Pancreas (tissue), 10 donors: ENCODE measurements at regions of chr1 and their contacts with region 1.

Region 1: GRCh38 chr1:220099826-220100225 is 5.9 kb downstream of the IARS2 start:
- DNase-seq: no peak
- ATAC-seq: no peak
- H3K4me3 ChIP-seq: no peak overlapping the region
- H3K27ac ChIP-seq: no peak overlapping the region
- H3K4me1 ChIP-seq: peaks cover 5 to 10% (median 5%) of the 10 kb centered on the region in 3 donors
- H3K27me3 ChIP-seq: no peaks in the 10 kb centered on the region
- CTCF ChIP-seq: no peak

Region 2: DNA sequence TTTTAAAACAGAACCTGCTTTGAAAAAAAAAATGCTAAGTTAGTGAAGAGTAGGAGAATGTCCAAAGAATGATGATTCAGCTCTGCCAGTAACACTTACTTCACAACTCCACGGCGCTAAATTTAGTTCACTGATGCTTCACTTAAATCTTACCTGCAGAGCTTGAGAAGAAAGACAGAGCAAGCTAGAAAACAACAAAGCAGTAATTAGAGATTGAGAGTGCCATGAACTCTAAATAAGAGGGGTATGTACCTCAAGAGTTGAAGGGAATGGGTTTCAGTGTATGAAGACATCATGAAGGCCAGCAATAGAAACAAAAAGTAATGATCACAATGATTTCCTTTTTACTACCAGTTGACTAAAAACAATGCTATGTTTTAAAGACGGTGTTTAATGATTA is 86.3 kb before region 1 on chr1:
- intact Hi-C with region 1: loop called in 1 of 3 experiments (anchors 10 kb)
- DNase-seq: no peak
- ATAC-seq: peak in 1 of 4 donors; percentile 27
- H3K4me3 ChIP-seq: no peak overlapping the region
- H3K27ac ChIP-seq: no peak overlapping the region
- H3K4me1 ChIP-seq: no peaks in the 10 kb centered on the region
- H3K27me3 ChIP-seq: no peaks in the 10 kb centered on the region
- CTCF ChIP-seq: no peak

Region 3: GRCh38 chr1:220219865-220220698 is 120.3 kb after region 1 on chr1:
- intact Hi-C with region 1: no loop called
- DNase-seq: no peak
- ATAC-seq: no peak
- H3K4me3 ChIP-seq: no peak overlapping the region
- H3K27ac ChIP-seq: no peak overlapping the region
- H3K4me1 ChIP-seq: no peaks in the 10 kb centered on the region
- H3K27me3 ChIP-seq: no peaks in the 10 kb centered on the region
- CTCF ChIP-seq: no peak